ENCODE measurements at regions of chr3 and their contacts with region 1.

Region 1: DNA sequence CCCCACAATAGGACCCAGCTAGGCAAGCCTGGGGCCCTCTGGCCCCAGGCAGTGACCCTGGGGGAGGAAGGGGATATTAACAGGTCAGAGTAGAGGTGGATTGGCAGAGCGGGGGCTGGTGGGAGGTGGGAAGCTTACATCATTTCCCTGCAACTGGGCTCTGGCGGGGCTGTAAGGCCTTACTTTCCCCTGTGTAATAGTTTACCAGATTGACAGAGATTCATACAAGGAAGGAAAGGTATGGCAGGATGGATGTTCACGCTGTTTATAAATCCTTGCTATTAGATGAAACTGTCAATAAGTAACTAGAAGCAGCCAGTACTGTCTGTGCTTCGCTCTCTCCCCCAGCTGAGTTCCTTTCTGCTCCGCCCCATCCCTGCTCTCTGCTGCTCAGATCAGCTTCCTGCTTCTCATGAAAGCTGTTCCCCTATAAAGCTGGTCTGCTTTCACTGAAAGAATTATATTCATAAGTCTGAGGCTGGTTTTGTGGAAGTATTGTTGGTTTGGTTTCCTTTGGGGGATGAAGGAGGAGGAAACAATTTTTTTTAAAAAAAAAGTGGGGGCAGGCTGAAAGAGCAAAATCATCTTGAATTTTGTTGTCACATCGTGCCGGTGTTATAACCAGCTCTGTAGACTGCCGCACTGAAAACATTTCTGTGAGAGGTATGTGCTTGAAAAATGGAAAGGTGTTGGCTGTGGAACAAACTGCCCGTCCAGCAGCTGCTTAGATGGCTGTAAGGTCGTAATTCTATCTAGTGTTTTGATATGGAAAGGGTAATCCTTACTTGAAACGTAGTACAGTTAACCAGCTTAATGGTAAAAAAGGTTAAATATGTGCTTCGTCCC is 76.4 kb downstream of the BBX start:
- DNase-seq: peak; percentile 68
- ATAC-seq: peak; percentile 94
- H3K4me3 Mint-ChIP-seq: peak overlapping the region; percentile 87
- H3K27ac Mint-ChIP-seq: peak overlapping the region; percentile 94
- H3K4me1 Mint-ChIP-seq: peaks cover 37% of the 10 kb centered on the region
- H3K27me3 Mint-ChIP-seq: no peaks in the 10 kb centered on the region

Region 2: GRCh38 chr3:107627962-107628542 is 28.9 kb after region 1 on chr3:
- CTCF ChIA-PET with region 1: interaction called, 10 read pairs
- POLR2A ChIA-PET with region 1: interaction called, 3 read pairs
- DNase-seq: no peak
- ATAC-seq: no peak
- H3K4me3 Mint-ChIP-seq: no peak overlapping the region
- H3K27ac Mint-ChIP-seq: no peak overlapping the region
- H3K4me1 Mint-ChIP-seq: peaks cover 16% of the 10 kb centered on the region
- H3K27me3 Mint-ChIP-seq: no peaks in the 10 kb centered on the region